PC-3 (cell line): ENCODE measurements at regions of chr19 and their contacts with region 1.

Region 1: GRCh38 chr19:13839130-13839937 is 37.6 kb upstream of the NANOS3 start:
- DNase-seq: peak; percentile 94
- ATAC-seq: peak; percentile 25
- H3K4me3 ChIP-seq: peak overlapping the region; percentile 82
- H3K27ac ChIP-seq: peak overlapping the region; percentile 96
- H3K4me1 ChIP-seq: peaks cover 72% of the 10 kb centered on the region
- H3K27me3 ChIP-seq: no peaks in the 10 kb centered on the region
- CTCF ChIP-seq: no peak

Region 2: DNA sequence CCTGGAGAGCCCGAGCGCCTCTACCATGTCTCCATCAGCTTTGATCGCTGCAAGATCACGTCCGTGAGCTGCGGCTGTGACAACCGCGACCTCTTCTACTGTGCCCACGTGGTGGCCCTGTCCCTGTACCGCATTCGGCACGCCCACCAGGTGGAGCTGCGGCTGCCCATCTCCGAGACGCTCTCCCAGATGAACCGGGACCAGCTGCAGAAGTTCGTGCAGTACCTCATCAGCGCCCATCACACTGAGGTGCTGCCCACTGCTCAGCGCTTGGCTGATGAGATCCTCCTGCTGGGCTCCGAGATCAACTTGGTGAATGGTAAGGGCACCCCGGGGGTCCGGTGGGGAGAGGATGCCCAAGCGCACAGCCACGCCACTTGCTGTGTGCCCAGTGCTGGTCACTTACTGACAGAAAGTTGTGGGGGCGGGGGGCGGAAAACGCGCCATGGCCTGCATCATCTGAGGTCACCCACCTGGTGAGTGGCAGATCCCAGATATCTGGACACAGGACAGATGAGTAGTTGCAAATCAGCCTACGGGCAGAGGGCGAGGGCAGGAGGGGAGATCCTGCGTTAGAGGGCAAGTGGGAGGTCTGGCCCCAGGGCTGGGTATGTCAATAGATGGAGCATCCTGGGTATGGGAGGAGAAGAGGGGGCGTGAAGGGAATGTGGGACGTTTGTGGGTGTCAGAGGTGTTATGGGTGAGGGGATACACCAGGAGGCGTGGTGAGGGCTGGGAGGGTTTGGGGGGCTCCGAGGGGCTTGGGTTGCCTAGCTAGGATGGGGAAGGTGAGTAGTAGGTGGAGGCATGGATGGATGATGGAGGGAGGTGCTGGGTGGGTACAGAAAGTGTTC is 34.3 kb before region 1 on chr19:
- CTCF ChIA-PET with region 1: no interaction called
- POLR2A ChIA-PET with region 1: interaction called, 12 read pairs
- intact Hi-C with region 1: no loop called
- DNase-seq: no peak
- ATAC-seq: no peak
- H3K4me3 ChIP-seq: no peak overlapping the region
- H3K27ac ChIP-seq: no peak overlapping the region
- H3K4me1 ChIP-seq: peaks cover 5% of the 10 kb centered on the region; the same call in 1 of the 2 replicates
- H3K27me3 ChIP-seq: no peaks in the 10 kb centered on the region
- CTCF ChIP-seq: peak; percentile 52

Region 3: DNA sequence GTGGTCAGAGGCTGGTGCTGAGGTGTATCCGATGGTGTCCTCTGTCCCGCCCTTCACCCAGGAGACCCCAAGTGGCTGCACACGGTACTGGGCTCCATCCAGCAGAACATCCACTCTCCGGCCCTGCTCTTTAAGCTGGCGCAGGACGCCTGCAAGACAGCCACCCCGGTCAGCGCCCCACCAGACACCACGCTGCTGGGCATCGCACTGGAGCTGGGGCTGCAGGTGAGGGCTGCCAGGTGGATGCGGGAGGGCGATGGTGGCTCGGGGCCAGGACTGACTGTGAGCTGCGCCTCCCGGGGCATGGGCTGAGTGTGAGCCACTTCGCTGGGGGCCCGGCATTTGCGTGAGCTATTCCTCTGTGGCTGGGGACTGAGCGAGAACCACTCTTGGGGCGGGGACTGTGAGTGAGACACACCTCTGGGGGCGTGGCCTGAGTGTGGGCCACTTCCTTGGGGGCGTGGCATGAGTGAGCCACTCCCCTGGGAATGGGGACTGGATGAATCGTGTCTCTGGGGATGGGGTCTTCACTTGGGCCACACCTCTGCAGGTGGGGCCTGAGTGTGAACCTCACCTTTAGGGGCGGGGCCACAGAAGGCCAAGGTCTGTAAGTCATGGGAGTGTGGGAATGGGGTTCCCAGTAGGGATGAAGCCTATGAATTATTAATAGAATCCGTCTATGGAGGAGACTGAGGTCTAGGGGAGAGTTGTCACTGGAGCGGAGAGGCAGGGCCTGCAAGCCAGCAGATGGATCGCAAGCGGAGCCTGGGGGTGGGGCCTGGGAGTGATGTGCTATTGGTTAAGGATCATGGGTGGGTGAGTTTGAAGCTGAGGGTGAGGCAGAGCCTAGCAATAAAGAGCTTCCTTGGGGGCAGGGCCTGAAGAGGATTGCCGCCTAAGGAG is 13.6 kb before region 1 on chr19:
- CTCF ChIA-PET with region 1: no interaction called
- POLR2A ChIA-PET with region 1: interaction called, 13 read pairs
- intact Hi-C with region 1: no loop called
- DNase-seq: peak; percentile 49
- ATAC-seq: peak; percentile 58
- H3K4me3 ChIP-seq: no peak overlapping the region
- H3K27ac ChIP-seq: no peak overlapping the region
- H3K4me1 ChIP-seq: no peaks in the 10 kb centered on the region
- H3K27me3 ChIP-seq: no peaks in the 10 kb centered on the region
- CTCF ChIP-seq: no peak